ENCODE measurements at regions of chr11 and their contacts with region 1.

Region 1: DNA sequence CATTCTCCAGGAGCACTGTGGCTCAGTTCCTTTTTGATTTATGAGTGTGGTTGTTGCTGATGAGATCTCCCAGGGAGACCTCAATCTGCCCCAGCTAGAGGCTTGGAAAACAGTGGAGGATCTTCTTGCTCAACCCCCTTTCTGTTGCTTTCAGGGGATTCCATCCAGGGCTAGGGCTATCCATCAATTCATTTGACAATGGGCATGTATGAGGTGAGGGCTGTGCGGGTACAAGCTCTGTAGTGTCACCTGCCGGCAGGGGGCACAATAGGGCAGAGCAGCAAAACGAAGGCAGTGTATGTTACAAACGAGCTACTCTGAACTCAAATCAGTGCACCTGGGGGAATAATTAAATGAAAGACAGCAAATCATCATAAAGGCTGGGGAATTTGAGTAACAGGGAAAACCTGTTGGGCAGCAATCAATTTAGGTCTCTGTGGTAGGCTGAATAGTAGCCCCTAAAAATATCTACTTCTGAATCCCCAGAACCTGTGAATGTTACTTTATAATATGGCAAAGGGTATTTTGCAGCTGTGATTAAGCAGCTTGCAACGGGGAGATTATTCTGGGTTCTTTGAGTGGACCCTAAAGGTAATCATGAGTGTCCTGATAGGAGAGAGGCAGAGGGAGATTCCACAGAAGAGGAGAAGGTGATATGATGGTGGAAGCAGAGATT is 170.3 kb upstream of the ZBED5 start:
- DNase-seq: peak; percentile 81
- H3K4me3 Mint-ChIP-seq: no peak overlapping the region
- H3K27ac Mint-ChIP-seq: no peak overlapping the region
- H3K4me1 Mint-ChIP-seq: no peaks in the 10 kb centered on the region
- H3K27me3 Mint-ChIP-seq: peaks cover 13% of the 10 kb centered on the region

Region 2: GRCh38 chr11:10933455-10934292 is 94.5 kb before region 1 on chr11:
- CTCF ChIA-PET with region 1: interaction called, 72 read pairs
- POLR2A ChIA-PET with region 1: no interaction called
- DNase-seq: peak; percentile 83
- H3K4me3 Mint-ChIP-seq: peak overlapping the region; percentile 63
- H3K27ac Mint-ChIP-seq: no peak overlapping the region
- H3K4me1 Mint-ChIP-seq: peaks cover 15% of the 10 kb centered on the region
- H3K27me3 Mint-ChIP-seq: peaks cover 49% of the 10 kb centered on the region

Region 3: DNA sequence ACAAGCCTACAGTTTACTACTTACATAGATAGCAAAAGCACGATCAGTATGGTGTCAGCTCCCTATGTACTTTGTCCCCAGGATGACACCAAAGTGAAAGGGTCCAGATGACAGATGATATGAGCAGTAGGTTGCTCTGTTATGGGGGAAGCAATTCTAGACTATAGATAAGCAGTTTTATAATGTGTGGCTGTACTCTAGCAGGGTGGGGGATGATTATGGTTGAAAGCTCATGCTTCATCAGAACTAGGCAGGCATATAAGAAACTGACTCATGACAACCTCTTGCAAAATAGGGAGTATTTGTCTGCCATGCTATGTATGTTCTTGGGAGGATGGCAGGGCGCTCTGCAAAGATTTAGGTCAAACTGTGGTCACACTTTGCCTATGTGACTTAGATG is 12.1 kb before region 1 on chr11:
- CTCF ChIA-PET with region 1: interaction called, 19 read pairs
- POLR2A ChIA-PET with region 1: no interaction called
- DNase-seq: no peak
- H3K4me3 Mint-ChIP-seq: no peak overlapping the region
- H3K27ac Mint-ChIP-seq: no peak overlapping the region
- H3K4me1 Mint-ChIP-seq: no peaks in the 10 kb centered on the region
- H3K27me3 Mint-ChIP-seq: peaks cover 10% of the 10 kb centered on the region

Region 4: GRCh38 chr11:11157185-11157584 is 129.0 kb after region 1 on chr11:
- CTCF ChIA-PET with region 1: interaction called, 26 read pairs
- POLR2A ChIA-PET with region 1: no interaction called
- DNase-seq: peak; percentile 44
- H3K4me3 Mint-ChIP-seq: no peak overlapping the region
- H3K27ac Mint-ChIP-seq: no peak overlapping the region
- H3K4me1 Mint-ChIP-seq: peaks cover 21% of the 10 kb centered on the region
- H3K27me3 Mint-ChIP-seq: peaks cover 5% of the 10 kb centered on the region

Region 5: GRCh38 chr11:11265994-11266606 is 237.9 kb after region 1 on chr11:
- CTCF ChIA-PET with region 1: interaction called, 26 read pairs
- POLR2A ChIA-PET with region 1: no interaction called
- DNase-seq: peak; percentile 68
- H3K4me3 Mint-ChIP-seq: no peak overlapping the region
- H3K27ac Mint-ChIP-seq: no peak overlapping the region
- H3K4me1 Mint-ChIP-seq: no peaks in the 10 kb centered on the region
- H3K27me3 Mint-ChIP-seq: no peaks in the 10 kb centered on the region

Region 6: GRCh38 chr11:11318961-11319360 is 290.8 kb after region 1 on chr11:
- CTCF ChIA-PET with region 1: no interaction called
- POLR2A ChIA-PET with region 1: no interaction called
- DNase-seq: no peak
- H3K4me3 Mint-ChIP-seq: no peak overlapping the region
- H3K27ac Mint-ChIP-seq: no peak overlapping the region
- H3K4me1 Mint-ChIP-seq: no peaks in the 10 kb centered on the region
- H3K27me3 Mint-ChIP-seq: peaks cover 3% of the 10 kb centered on the region

Region 7: DNA sequence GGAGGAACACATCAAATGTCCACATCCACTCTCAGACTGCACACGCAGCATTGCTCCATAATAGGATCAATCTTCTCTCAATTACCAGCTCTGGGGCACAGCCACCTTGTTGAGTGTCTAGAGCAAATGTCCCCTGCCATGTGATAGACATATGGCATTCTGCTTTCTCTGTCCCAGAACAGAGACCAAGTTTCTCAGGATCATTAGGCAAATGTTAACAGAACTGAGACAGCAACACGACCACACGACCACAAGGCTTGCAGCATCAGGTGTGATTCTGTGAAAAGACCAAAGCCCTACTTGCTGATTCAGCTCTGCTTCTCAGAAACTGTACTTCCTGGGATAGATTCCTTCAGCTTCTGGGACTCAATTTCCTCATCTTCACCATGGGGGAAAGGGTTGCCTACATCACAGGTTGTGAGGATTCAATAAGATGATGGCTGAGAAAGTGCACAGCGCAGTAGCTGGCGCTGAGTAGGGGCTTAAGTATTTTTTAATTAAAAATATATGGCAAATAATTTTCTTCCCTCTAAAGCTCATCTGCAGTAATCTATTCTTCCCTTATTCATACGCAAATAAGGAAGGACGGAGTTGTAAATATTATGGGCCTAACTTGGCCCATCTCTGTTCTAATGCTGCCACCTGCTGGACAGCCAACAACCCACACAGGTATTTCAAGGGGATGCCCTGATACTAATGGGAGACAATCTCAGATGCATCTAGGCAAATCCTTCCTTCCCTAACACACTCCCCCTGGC is 759.3 kb after region 1 on chr11:
- CTCF ChIA-PET with region 1: interaction called, 49 read pairs
- POLR2A ChIA-PET with region 1: interaction called, 3 read pairs
- DNase-seq: peak; percentile 73
- H3K4me3 Mint-ChIP-seq: no peak overlapping the region
- H3K27ac Mint-ChIP-seq: no peak overlapping the region
- H3K4me1 Mint-ChIP-seq: peaks cover 1% of the 10 kb centered on the region
- H3K27me3 Mint-ChIP-seq: peaks cover 7% of the 10 kb centered on the region